Activated naive CD4-positive, alpha-beta T cell treated with anti-CD3 and anti-CD28 coated beads for 36 hours (primary cell): ENCODE measurements at regions of chr1 and their contacts with region 1.

Region 1: DNA sequence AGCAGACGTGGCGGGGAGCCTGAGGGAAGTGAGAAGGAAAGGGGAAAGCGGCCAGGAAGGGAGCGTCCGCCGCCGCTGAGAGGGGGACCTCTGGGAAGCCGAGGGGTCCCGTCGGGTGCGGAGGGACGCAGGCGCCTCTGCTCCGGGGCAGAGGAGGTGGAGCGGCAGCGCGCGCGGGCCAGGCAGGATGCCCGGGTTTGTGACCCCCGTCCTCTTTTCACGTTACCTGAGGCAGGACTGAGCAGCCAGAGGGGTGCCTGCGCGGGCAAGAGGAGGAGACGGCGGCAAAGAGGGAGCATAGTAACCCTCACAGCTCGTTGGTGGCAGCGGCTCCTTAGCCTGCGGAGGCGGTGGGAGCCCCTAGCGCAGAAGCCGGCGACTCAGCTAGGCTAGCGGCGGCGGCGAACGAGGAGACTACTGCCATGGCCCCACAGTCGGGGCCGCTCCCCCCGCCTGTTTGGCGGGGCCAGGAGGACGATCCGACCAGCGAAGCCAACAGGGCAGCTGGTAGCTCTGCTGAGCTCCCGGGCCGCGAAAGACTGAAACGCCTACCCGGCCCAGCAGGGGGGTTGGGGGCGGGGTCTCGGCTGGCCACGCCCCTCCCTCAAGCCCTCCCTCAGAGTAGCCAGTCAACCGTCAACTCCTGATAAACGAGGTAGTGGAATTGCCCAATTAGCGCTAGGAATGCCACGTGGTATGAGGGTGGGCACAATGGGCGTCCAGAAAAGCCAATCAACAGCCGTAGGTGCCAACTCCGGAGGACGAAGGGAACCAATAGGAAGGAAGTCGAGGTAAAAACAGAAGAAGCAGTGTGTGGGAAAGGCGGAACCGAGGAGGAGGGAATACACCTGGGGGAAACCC is at the start of gene TESK2:
- DNase-seq: peak; percentile 99
- H3K4me3 Mint-ChIP-seq: no peak within 1 kb of the TSS
- H3K27ac Mint-ChIP-seq: no peak within 1 kb of the TSS
- H3K4me1 Mint-ChIP-seq: peaks cover 6% of the 10 kb centered on the region
- H3K27me3 Mint-ChIP-seq: no peaks in the 10 kb centered on the region
- total RNA-seq, gene TESK2: 4.8 to 6.7 TPM

Region 2: GRCh38 chr1:44684525-44684924 is 806.3 kb before region 1 on chr1:
- CTCF ChIA-PET with region 1: no interaction called
- intact Hi-C with region 1: no loop called
- DNase-seq: no peak
- H3K4me3 Mint-ChIP-seq: no peak overlapping the region
- H3K27ac Mint-ChIP-seq: no peak overlapping the region
- H3K4me1 Mint-ChIP-seq: peaks cover 6% of the 10 kb centered on the region
- H3K27me3 Mint-ChIP-seq: no peaks in the 10 kb centered on the region

Region 3: GRCh38 chr1:44835738-44836675 is 654.8 kb before region 1 on chr1:
- CTCF ChIA-PET with region 1: no interaction called
- intact Hi-C with region 1: loop called (anchors 2 kb)
- DNase-seq: peak; percentile 98
- H3K4me3 Mint-ChIP-seq: no peak overlapping the region
- H3K27ac Mint-ChIP-seq: no peak overlapping the region
- H3K4me1 Mint-ChIP-seq: peaks cover 5% of the 10 kb centered on the region
- H3K27me3 Mint-ChIP-seq: peaks cover 9% of the 10 kb centered on the region

Region 4: GRCh38 chr1:45230540-45230939 is 260.3 kb before region 1 on chr1:
- CTCF ChIA-PET with region 1: no interaction called
- intact Hi-C with region 1: no loop called
- DNase-seq: peak; percentile 47
- H3K4me3 Mint-ChIP-seq: no peak overlapping the region
- H3K27ac Mint-ChIP-seq: no peak overlapping the region
- H3K4me1 Mint-ChIP-seq: no peaks in the 10 kb centered on the region
- H3K27me3 Mint-ChIP-seq: no peaks in the 10 kb centered on the region

Region 5: DNA sequence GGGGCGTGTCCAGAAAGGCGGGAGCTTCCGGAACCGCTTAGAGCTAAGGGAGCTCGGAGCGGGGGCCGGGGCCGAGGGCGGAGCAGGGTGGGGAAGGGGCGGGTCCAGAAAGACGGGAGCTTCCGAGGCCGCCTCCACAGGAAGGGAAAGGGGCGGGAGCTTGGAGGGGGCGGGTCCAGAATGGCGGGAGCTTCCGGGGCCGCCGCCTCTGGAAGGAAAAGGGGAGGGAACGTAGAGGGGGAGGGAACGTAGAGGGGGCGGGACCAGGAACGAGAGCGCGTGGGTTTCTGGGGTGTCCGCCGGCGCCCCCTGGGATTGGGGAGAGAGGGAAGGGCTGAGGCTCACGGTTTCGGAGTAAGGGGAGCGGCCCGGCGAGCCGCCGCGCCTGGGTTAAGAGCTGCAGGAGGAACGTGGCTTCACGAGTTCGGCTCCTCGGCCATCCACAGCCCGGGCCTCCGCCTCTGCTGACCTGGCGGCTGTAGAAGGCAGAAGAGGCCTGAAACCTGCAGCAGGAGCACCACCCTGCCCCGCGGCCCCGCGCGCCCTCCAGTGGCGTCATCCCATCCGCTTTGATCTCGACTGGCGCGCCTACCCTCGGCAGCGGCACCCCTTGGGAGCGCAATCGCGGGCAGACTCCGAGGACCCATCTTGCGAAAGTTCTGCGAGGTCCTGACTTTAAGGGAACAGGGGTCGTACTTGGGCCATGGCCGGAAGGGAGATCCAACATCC is 187.1 kb before region 1 on chr1:
- CTCF ChIA-PET with region 1: interaction called, 4 read pairs
- intact Hi-C with region 1: loop called (anchors 1 kb)
- DNase-seq: peak; percentile 100
- H3K4me3 Mint-ChIP-seq: peak overlapping the region; percentile 91
- H3K27ac Mint-ChIP-seq: peak overlapping the region; percentile 94
- H3K4me1 Mint-ChIP-seq: peaks cover 33% of the 10 kb centered on the region
- H3K27me3 Mint-ChIP-seq: no peaks in the 10 kb centered on the region

Region 6: DNA sequence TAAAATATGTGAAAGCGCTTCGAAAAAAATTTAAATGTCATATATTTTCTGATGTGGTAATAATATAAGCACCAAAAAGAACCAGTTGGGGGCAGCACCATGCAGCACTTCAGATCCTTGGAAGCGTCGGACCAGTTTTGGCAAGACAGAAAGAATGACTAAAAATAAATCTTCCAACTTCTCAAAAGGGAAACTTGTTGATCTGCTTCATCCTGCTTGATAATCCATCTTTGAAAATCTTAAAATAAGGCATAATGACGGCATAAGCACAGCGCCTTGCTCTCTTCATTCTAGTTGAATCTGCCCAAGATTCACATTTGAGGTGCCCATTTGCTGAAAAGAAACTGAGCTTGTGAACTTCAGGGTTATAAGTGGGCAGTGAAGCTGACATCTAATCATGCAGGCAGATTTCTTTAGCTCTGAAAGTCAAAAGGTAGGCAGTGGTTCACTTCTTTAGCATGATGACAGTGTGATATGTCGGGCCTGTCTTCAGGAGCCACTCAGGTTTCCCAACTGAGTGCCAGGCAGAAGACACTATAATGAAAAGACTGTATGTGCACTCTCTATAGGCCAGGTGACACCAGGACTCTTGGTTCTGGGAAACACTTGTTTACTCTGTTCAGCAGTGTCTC is 130.9 kb before region 1 on chr1:
- CTCF ChIA-PET with region 1: interaction called, 175 read pairs
- intact Hi-C with region 1: loop called (anchors 1 kb)
- DNase-seq: peak; percentile 84
- H3K4me3 Mint-ChIP-seq: no peak overlapping the region
- H3K27ac Mint-ChIP-seq: peak overlapping the region; percentile 37
- H3K4me1 Mint-ChIP-seq: peaks cover 10% of the 10 kb centered on the region
- H3K27me3 Mint-ChIP-seq: no peaks in the 10 kb centered on the region

Region 7: DNA sequence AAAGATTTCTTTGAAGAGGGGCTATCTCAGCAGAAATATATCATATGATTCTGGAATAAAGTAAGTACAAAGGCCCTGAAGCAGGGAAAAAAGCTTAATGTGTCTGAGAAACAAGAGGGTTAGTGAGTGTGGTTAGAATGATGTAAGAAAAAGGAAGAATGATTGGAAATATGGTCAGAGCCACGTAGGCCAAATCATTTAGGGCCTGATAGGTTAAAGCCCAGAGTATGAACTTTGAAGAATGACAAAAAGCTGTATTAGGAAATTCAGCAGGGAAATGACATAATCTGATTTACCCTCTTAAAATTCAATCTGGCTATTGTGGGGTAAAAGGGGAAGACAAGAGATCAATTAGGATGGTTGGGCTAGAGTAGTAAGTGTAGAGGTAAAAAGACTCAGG is 81.6 kb before region 1 on chr1:
- CTCF ChIA-PET with region 1: interaction called, 5 read pairs
- intact Hi-C with region 1: loop called (anchors 5 kb)
- DNase-seq: no peak
- H3K4me3 Mint-ChIP-seq: no peak overlapping the region
- H3K27ac Mint-ChIP-seq: peak overlapping the region; percentile 4
- H3K4me1 Mint-ChIP-seq: peaks cover 7% of the 10 kb centered on the region
- H3K27me3 Mint-ChIP-seq: no peaks in the 10 kb centered on the region

Region 8: DNA sequence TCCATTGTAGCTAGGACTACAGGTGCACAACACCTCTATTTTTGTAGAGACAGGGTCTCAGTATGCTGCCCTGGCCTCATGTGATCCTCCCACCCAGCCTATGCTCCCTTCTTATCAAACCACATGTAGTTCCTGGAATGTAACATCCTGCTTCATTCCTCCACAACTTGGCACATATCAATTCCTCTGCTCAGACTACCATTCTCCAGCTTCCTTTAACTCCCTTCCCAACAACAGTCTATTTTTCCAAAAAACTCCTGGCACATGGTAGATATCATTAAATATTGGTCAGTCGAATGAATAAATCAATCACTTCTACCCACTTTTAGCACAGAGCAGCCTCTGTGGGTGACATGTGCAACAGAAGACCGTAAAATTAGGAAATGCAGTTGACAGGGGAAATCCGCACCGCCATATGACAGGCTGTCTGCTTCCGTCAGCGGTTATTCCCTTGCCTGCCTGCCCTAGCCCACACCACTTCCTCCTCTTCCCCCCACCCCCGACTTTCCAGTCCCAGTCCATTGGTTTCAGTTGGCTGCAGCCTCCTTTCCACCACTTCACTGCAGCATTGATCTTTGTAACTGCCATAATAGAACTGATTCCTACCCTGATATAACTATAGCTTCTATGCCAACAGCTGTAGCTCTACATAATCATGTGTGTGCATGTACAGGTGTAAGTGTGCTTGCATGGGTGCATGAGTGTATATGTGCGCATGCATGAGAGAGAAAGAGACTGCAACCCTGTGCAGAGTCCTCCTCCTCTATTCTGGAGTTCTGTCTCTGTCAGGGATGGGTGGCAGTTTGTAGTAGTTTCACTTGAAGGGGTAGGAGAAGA is 52.9 kb after region 1 on chr1:
- CTCF ChIA-PET with region 1: no interaction called
- intact Hi-C with region 1: loop called (anchors 1 kb)
- DNase-seq: peak; percentile 90
- H3K4me3 Mint-ChIP-seq: peak overlapping the region; percentile 25
- H3K27ac Mint-ChIP-seq: peak overlapping the region; percentile 74
- H3K4me1 Mint-ChIP-seq: peaks cover 34% of the 10 kb centered on the region
- H3K27me3 Mint-ChIP-seq: no peaks in the 10 kb centered on the region